ENCODE measurements at regions of chr7 and their contacts with region 1.

Region 1: GRCh38 chr7:117119192-117119924 is 166.1 kb downstream of the ST7 start:
- H3K4me3 Mint-ChIP-seq: no peak overlapping the region
- H3K27ac Mint-ChIP-seq: no peak overlapping the region
- H3K4me1 Mint-ChIP-seq: no peaks in the 10 kb centered on the region
- H3K27me3 Mint-ChIP-seq: no peaks in the 10 kb centered on the region

Region 2: GRCh38 chr7:116929914-116930913 is 189.1 kb before region 1 on chr7:
- intact Hi-C with region 1: loop called (anchors 2 kb)
- H3K4me3 Mint-ChIP-seq: no peak overlapping the region
- H3K27ac Mint-ChIP-seq: no peak overlapping the region
- H3K4me1 Mint-ChIP-seq: peaks cover 5% of the 10 kb centered on the region
- H3K27me3 Mint-ChIP-seq: peaks cover 12% of the 10 kb centered on the region

Region 3: GRCh38 chr7:116984917-116985316 is 134.4 kb before region 1 on chr7:
- intact Hi-C with region 1: loop called (anchors 1 kb)
- H3K4me3 Mint-ChIP-seq: no peak overlapping the region
- H3K27ac Mint-ChIP-seq: no peak overlapping the region
- H3K4me1 Mint-ChIP-seq: peaks cover 12% of the 10 kb centered on the region
- H3K27me3 Mint-ChIP-seq: no peaks in the 10 kb centered on the region

Region 4: GRCh38 chr7:117041007-117041406 is 78.4 kb before region 1 on chr7:
- intact Hi-C with region 1: loop called (anchors 10 kb)
- H3K4me3 Mint-ChIP-seq: no peak overlapping the region
- H3K27ac Mint-ChIP-seq: peak overlapping the region; percentile 70
- H3K4me1 Mint-ChIP-seq: peaks cover 22% of the 10 kb centered on the region
- H3K27me3 Mint-ChIP-seq: no peaks in the 10 kb centered on the region

Measured in dendritic cell treated with granulocyte-macrophage colony-stimulating factor and Interleukin-4, amounts not matched to agents 40 ng/mL and 50 ng/mL, for 4 days (primary cell).